ENCODE measurements at regions of chr5 and their contacts with region 1.

Region 1: DNA sequence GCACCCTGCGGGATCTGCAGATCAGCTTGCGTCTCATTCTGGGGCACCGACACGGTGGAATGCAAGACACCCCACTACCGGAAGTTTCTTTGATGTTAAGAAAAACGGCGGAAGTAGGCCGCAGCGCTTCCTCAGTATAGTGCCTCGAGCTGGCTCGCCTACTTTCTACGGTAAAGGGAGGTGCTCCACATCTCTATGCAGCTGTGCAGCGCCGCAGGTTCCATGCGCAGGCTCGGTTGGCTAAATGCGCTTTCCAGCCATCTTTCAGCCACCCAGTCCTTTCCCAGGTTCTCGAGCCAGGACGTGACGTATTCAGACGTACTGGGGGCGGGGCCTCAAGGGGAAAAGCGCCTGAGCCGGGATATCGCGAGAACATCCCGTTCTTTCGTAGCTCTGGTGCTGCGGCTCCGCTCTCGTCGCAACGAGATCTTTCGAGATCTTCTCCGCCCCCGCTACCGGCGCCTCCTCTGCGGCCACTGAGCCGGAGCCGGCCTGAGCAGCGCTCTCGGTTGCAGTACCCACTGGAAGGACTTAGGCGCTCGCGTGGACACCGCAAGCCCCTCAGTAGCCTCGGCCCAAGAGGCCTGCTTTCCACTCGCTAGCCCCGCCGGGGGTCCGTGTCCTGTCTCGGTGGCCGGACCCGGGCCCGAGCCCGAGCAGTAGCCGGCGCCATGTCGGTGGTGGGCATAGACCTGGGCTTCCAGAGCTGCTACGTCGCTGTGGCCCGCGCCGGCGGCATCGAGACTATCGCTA is at the start of gene HSPA4:
- DNase-seq: peak; percentile 96
- H3K4me3 Mint-ChIP-seq: peak within 1 kb of the TSS; percentile 96
- H3K27ac Mint-ChIP-seq: peak within 1 kb of the TSS; percentile 100
- H3K4me1 Mint-ChIP-seq: peaks cover 46% of the 10 kb centered on the region
- H3K27me3 Mint-ChIP-seq: peaks cover 2% of the 10 kb centered on the region
- total RNA-seq, gene HSPA4: 244 and 247 TPM in 2 replicates

Region 2: DNA sequence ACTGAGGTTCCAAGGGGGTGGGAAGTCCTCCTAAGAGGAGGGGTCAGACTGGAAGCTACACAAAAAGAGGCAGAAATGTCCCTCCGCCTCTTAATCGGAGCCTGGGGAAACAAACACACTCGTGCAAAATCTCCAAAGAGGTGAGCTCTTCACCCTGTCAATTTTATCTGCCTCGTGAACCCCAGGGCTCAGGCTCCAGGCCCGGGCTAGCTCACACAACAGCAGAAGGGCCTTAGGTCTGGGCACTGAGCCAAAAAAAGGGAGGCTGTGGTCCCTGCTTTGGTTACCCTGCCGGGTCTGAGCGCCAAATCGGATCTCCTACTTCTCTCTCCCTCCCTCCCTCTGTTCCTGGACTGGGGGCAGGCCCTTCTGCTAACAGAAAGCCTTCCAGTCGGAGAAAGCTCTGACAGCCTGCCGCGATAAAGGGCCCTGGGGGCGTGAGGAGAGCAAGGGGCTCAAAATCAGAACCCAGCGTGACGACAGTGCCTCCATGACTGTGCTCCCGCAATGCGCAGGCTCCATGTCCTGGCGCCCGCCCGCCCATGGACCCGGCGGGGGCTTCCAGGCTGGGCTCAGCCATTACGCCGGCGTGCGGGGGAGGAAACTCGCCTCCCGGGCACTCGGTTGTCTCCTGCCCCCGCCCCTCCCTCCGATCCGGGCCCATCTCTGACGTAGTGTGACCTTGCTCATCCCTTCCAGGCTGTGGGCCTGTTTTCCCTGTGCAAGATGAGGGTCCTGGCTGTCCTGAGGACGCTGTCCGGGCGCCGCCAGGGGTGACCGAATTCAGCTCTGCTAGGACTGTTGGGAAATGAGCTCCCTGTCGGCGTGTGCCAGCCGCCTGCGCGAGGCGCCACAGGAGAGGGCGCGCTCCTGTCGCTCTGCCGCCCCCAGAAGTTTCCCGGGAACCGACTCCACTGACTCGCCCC is 758.4 kb before region 1 on chr5:
- intact Hi-C with region 1: loop called (anchors 1 kb)
- DNase-seq: peak; percentile 53
- H3K4me3 Mint-ChIP-seq: peak overlapping the region; percentile 93
- H3K27ac Mint-ChIP-seq: peak overlapping the region; percentile 75
- H3K4me1 Mint-ChIP-seq: peaks cover 30% of the 10 kb centered on the region
- H3K27me3 Mint-ChIP-seq: peaks cover 15% of the 10 kb centered on the region

Region 3: DNA sequence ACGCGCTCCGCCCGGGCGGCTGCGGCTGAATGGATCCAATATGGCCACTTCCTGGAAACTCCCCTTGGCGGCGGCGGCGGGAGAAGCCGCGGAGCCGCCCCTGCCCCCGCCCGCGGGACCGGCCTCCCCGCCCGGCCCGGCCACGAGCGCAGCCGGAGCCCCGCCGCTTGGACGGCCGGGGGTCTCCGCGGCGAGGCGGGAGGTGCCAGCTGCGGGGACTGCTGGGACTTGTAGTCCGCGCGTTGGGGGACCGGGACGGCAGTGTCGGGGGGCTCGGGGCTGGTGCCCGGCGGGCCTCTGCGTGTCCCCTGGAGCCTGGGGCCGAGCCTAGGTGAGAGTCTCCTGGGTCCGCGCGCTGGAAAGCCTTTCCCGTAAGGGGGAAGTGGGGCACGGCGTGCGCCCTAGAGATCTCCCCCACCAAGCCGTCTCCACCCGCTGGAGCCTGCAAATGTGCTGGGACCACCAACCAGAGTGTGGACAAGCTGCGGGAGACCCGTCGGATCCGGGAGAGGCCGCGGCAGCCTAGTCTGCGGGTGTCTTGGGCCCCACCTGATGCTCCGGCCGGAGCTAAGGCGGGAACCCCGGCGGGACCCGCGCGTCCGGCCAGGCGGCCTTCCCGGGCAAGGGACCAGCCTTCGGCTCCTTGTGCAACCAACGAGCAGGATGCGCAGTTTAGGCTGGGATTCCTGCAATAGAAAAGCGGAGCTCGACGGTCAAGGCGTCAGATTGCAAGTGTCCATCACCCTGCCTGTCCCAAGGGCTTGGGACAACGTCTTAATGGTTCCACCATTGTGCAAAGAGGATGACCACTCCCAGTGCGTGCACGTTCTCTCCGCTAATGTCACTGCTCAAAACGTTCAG is 274.3 kb before region 1 on chr5 and contains the start of gene SEPTIN8:
- intact Hi-C with region 1: no loop called
- DNase-seq: peak; percentile 43
- H3K4me3 Mint-ChIP-seq: peak within 1 kb of the TSS; percentile 87
- H3K27ac Mint-ChIP-seq: peak within 1 kb of the TSS; percentile 63
- H3K4me1 Mint-ChIP-seq: peaks cover 41% of the 10 kb centered on the region
- H3K27me3 Mint-ChIP-seq: peaks cover 45% of the 10 kb centered on the region
- total RNA-seq, gene SEPTIN8: 45.8 and 46.2 TPM in 2 replicates

Region 4: GRCh38 chr5:132963175-132964104 is 88.3 kb before region 1 on chr5 and contains the start of gene AFF4:
- intact Hi-C with region 1: loop called (anchors 1 kb)
- DNase-seq: peak; percentile 85
- H3K4me3 Mint-ChIP-seq: peak within 1 kb of the TSS; percentile 93
- H3K27ac Mint-ChIP-seq: peak within 1 kb of the TSS; percentile 96
- H3K4me1 Mint-ChIP-seq: peaks cover 17% of the 10 kb centered on the region
- H3K27me3 Mint-ChIP-seq: peaks cover 3% of the 10 kb centered on the region
- total RNA-seq, gene AFF4: 38.3 and 40.9 TPM in 2 replicates

Region 5: DNA sequence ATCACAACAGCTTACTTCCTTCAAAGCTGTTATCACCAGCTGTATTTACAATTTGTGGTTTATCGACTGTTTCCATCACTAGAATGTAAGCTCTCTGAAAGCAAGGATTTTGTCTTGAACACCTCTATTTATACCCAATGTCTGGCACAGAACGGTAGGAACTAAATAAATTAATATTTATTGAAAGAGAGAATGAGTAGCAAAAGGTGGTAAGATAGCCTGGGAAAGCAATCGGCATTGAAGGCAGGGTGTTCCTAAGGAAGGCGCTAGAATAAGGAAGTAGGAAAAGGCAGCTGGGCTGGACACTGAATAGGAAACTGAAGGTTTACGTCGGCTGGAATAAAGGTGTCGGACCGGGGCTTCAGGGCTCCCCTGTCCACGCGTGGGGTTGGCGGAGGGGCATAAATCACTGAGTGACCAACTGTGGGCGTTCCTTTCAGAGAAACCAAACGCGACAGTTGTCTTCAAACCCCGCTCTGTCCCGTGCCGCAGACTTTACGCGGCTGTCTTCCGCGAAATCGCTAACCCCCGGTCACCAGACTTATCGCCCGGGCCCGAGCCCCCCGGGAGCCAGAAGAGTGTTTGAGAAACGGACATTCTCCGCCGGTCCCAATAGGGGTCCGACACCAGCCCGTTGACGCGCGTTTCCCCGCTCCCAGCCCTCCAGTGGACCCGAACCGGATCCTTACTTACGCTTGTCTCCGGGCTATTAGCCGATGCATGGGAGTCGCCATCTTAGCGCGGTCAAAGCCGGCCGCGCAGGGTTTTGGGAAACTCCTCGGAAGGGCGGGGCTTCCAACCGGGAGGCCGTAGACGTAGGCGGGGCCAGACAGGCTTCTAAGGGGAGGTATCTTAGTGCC is 25.7 kb before region 1 on chr5 and contains the start of gene ZCCHC10:
- intact Hi-C with region 1: loop called (anchors 1 kb)
- DNase-seq: peak; percentile 89
- H3K4me3 Mint-ChIP-seq: peak within 1 kb of the TSS; percentile 90
- H3K27ac Mint-ChIP-seq: peak within 1 kb of the TSS; percentile 93
- H3K4me1 Mint-ChIP-seq: peaks cover 23% of the 10 kb centered on the region
- H3K27me3 Mint-ChIP-seq: peaks cover 4% of the 10 kb centered on the region
- total RNA-seq, gene ZCCHC10: 37.6 and 41.7 TPM in 2 replicates

Region 6: DNA sequence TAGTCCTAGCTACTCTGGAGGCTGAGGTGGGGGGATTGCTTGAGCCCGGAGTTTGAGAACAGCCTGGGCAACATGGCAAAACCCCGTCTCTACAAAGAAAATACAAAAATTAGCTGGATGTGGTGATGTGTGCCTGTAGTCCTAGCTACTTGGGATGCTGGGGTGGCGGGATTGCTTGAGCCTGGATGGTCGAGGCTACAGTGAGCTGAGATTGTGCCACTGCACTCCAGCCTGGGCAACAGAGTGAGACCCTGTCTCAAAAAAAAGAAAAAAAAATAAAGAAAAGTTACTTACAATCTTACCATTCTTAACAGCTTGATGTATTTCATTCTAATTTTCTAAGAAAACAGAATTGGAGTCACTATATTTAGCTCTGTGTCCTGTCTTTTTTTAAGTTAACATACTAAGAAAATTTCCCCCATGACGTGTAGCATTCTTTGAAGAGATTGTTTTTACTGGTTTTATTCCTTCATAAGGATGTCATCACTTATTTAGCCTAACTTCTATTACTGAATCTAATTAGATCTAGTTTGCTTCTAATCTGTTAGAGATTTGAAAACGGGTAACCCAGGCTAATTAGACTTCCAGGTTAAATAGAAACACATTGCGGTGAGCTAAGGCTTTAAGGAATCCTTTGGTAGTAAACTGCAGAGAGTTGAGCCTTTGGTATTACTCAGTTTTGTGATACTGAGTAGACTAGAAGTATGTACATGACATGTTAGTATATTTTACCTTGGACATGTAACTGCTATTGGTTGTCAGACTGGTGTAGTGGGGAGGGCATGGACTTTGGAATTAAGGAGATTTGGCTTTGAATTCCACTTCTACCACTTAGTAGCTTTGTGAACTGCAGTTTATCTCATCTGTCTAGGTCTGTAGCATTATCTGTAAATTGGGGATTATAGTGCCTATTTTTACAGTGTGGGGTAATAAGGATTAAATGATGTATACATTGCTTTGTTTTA is 24.1 kb after region 1 on chr5:
- intact Hi-C with region 1: loop called (anchors 2 kb)
- DNase-seq: no peak
- H3K4me3 Mint-ChIP-seq: no peak overlapping the region
- H3K27ac Mint-ChIP-seq: peak overlapping the region; percentile 48
- H3K4me1 Mint-ChIP-seq: peaks cover 51% of the 10 kb centered on the region
- H3K27me3 Mint-ChIP-seq: no peaks in the 10 kb centered on the region

Region 7: DNA sequence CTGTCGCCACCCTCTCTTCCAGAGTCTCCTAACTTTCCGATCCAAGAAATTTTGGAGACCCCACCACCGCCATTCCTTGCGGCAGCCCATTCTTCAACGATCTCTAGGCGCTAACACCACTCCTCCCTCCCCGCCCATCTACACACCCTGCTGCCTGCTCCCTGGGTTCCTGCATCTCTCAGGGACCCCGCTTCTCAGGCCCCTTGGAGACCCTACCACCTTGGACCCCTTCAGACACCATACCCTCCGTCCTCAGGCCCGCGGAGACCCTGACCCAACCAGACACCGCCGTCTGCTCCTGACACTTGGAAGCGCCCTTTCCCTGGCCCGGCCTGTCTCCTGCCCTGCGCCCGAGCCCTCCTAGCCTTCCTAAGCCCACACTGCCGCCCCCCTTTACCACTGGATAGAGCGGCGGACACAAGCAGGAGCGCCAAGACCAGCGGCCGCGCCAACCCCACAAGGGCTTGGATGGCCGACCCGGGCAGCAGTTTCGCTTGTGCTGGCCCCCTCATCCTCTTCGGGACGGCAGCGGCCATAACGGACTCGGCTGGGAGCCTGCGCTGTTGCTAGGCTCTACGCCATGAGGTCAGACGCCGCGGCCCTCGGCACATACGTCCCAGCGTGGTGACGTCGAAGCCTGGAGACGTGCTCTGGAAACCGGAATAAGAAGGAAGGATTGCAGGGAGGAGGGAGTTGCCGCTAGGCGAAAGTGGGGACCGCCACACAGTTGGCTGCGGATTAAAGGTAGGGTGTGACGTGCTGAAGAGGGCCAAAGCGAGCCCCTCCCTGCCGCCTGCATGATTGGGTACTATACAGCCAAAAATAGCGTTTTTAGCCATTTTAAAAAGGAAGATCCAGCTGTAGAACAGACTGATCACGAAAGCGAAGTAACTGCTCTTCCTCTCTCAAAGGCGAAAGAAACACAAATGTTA is 916.6 kb after region 1 on chr5 and contains the start of gene C5orf15:
- intact Hi-C with region 1: loop called (anchors 10 kb)
- DNase-seq: peak; percentile 92
- H3K4me3 Mint-ChIP-seq: peak within 1 kb of the TSS; percentile 98
- H3K27ac Mint-ChIP-seq: peak within 1 kb of the TSS; percentile 96
- H3K4me1 Mint-ChIP-seq: peaks cover 55% of the 10 kb centered on the region
- H3K27me3 Mint-ChIP-seq: no peaks in the 10 kb centered on the region
- total RNA-seq, gene C5orf15: 50.0 and 50.8 TPM in 2 replicates